Aorta (tissue), 5 donors: ENCODE measurements at regions of chr2 and their contacts with region 1.

Region 1: GRCh38 chr2:20822535-20823490 is at the start of gene LDAH:
- DNase-seq: peak; percentile 93 to 98
- ATAC-seq: peak; percentile 97
- H3K4me3 ChIP-seq: peak within 1 kb of the TSS; percentile 50 to 65
- H3K27ac ChIP-seq: peak within 1 kb of the TSS; percentile 10 to 82
- H3K4me1 ChIP-seq: peaks cover 0 to 2% of the 10 kb centered on the region in 2 donors
- H3K27me3 ChIP-seq: no peaks in the 10 kb centered on the region
- total RNA-seq, gene LDAH: 13.0 to 18.3 TPM

Region 2: DNA sequence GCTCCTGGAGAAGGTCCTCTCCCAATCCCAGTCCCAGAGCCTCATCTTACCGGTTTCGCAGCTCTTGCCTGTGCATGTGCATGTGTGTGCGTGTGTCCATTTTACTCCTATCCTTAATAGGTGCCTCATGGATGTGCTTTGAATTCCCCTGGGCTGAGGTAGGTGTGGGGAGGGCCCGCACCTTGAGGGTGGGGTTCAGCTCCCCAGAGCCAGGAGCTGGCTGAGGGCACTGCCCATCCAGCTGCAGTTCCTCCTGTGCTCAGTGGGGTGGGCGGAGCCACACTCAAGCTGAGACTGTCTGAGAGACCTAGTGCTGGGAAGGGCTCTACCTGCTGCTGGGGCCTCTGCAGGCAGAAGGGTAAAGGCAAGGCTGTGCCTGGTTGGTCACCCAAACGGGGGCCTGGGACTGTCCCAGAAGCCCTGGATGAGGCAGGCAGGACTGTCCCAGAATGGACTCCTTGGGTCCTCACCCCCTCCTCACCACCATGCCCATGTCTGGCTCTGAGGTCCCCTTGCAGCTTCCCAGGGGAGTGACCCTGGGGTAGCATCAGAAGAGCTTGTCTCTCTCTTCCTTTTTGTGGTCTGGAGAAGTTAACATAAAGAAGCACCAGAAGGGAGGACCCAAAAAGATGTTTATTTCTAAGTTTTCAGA is 147.0 kb before region 1 on chr2:
- intact Hi-C with region 1: loop called in 1 of 2 experiments (anchors 5 kb)
- DNase-seq: no peak
- ATAC-seq: peak; percentile 48
- H3K4me3 ChIP-seq: no peak overlapping the region
- H3K27ac ChIP-seq: peak overlapping the region; percentile 23 to 80
- H3K4me1 ChIP-seq: no peaks in the 10 kb centered on the region
- H3K27me3 ChIP-seq: no peaks in the 10 kb centered on the region

Region 3: DNA sequence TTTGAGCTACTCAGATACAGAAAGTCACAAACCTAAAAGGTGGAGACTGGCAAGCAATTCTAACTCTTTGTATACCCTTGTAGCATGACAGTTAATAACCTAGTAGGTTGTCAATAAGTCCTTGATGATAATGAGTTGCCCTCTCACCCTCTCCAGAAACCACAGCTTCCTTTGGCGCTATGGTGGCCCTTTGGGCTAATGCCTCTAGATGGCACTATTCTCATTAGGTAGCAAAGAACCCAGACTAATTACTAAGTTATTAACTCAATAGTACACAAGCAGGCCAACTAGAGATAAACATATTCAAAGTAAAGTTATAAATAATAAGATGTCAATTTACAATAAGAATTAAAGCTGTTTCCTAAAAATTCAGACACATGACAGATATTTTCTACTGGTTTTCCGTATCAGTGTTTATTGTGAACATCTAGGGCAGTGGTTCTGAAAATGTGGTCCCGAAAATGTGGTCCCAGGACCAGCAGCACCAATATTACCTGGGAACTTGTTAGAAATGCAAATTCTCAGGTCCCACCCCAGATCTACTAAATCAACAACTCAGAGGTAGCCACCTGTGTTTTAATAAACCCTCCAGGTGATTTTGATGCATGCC is 41.1 kb before region 1 on chr2:
- intact Hi-C with region 1: loop called in 1 of 2 experiments (anchors 5 kb)
- DNase-seq: no peak
- ATAC-seq: no peak
- H3K4me3 ChIP-seq: no peak overlapping the region
- H3K27ac ChIP-seq: no peak overlapping the region
- H3K4me1 ChIP-seq: no peaks in the 10 kb centered on the region
- H3K27me3 ChIP-seq: no peaks in the 10 kb centered on the region